ENCODE measurements at regions of chr7 and their contacts with region 1.

Region 1: DNA sequence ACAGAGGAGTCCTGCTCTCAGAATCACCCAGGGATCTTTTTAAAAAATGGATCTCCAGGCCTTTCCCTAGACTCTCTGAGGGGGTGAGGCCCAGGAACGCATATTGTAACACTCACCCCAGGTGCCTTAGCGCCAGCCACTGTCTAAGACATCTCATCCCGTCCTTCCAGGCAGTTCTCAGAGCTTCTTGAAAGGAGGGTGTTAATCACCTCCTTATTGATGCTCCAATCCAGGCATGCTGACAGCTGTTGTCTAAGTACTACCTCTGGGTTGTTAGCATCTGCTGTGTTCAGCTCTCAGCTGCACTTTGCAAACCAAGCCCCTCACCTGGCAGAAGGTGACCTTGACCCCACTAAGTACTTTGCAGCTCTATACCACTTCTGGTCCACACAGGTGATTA is 36.0 kb downstream of the KIAA1549 start:
- DNase-seq: no peak
- H3K4me3 ChIP-seq: no peak overlapping the region
- H3K27ac ChIP-seq: no peak overlapping the region
- H3K4me1 ChIP-seq: no peaks in the 10 kb centered on the region
- CTCF ChIP-seq: no peak

Region 2: DNA sequence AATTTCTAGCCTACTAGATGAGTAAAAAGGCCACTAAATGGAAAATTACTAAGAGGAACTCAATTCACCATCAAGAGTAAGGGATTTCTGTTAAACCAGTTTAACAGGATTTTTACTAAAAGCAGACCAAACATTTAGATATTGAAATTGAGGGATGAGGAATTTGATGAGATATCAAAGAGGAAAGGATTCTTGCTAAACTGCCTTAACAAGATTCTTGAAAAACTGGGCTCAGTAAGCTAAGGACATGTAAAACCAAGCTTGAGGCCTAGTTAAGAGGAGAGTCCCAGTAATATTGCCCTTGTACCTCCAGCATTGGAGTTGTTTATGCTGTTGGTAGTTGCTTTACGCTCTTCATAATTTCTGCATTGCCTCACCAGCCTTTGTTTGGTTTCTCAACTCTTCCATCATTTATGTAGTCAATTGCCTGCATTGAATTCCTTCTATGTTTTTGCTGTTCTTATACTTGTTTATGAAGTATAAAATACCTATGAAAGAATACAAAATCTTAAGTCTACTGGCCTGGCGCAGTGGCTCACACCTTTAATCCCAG is 641.1 kb before region 1 on chr7:
- CTCF ChIA-PET with region 1: no interaction called
- POLR2A ChIA-PET with region 1: no interaction called
- intact Hi-C with region 1: no loop called
- DNase-seq: no peak
- H3K4me3 ChIP-seq: no peak overlapping the region
- H3K27ac ChIP-seq: no peak overlapping the region
- H3K4me1 ChIP-seq: no peaks in the 10 kb centered on the region
- CTCF ChIP-seq: no peak

Region 3: DNA sequence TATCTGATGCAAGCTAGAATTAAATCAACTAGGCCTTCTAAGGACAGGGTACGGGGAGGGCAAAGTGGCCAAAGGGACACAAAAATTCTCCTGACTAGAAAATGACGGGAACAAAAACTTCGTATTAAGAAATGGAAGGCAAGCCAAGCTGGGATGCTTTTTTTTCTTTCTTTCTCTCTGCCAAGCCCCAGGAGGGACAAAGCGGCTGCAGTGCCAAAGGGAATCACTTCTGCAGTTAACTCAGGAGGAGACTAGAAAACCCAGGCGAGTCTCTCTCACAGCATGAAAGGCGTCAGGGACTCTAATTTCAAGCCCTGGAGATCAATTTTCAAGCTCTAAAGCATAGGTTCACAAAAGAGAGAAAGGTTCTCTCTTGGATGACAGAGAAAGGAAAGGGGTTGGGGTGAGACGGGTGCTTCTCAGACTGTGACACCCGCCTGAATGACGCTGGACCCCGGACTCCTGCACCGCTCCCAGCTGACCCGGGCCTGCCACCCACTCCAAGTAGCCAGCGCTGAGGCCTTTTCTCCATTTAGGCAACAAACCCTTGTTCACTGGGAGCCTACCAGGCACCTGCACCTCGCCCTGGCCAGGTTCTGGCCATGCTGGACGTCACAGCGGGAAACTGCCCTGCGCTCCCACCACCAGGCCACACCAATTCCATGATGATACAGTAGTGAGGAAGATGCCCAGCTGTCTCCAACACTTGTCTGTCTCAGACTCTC is 20.5 kb before region 1 on chr7:
- CTCF ChIA-PET with region 1: no interaction called
- POLR2A ChIA-PET with region 1: interaction called, 3 read pairs
- intact Hi-C with region 1: loop called (anchors 2 kb)
- DNase-seq: no peak
- H3K4me3 ChIP-seq: no peak overlapping the region
- H3K27ac ChIP-seq: no peak overlapping the region
- H3K4me1 ChIP-seq: no peaks in the 10 kb centered on the region
- CTCF ChIP-seq: no peak